PC-3 (cell line): ENCODE measurements at regions of chr7 and their contacts with region 1.

Region 1: GRCh38 chr7:37181550-37181932 is 267.1 kb downstream of the ELMO1 start:
- DNase-seq: no peak
- ATAC-seq: no peak
- H3K4me3 ChIP-seq: no peak overlapping the region
- H3K27ac ChIP-seq: no peak overlapping the region
- H3K4me1 ChIP-seq: no peaks in the 10 kb centered on the region
- H3K27me3 ChIP-seq: peaks cover 25% of the 10 kb centered on the region; the same call in 1 of the 2 replicates
- CTCF ChIP-seq: no peak

Region 2: GRCh38 chr7:36670585-36671431 is 510.7 kb before region 1 on chr7:
- CTCF ChIA-PET with region 1: no interaction called
- POLR2A ChIA-PET with region 1: no interaction called
- intact Hi-C with region 1: loop called (anchors 10 kb)
- DNase-seq: peak; percentile 82
- ATAC-seq: peak; percentile 78
- H3K4me3 ChIP-seq: no peak overlapping the region
- H3K27ac ChIP-seq: no peak overlapping the region
- H3K4me1 ChIP-seq: no peaks in the 10 kb centered on the region
- H3K27me3 ChIP-seq: peaks cover 15% of the 10 kb centered on the region; the same call in 1 of the 2 replicates
- CTCF ChIP-seq: peak; percentile 85

Region 3: DNA sequence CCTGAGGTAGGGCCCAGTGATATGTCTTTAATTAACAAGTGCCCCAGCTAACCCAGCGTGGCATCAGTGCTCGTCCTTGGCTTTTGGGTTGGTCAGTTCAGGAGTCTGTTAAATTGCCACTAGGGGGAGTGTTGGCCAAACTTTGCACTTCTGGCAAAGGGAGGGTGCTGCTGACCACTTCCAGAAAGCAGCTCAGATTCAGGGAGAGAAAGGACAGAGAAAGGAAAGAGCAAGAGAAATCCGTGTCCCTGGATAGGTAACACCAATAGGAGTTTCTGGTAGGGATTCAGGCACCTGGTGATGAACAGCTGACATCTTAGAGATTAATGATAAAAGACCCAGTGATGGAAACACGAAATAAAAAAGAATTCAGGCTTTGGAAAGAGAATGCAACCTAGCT is 214.2 kb before region 1 on chr7:
- CTCF ChIA-PET with region 1: interaction called, 38 read pairs
- POLR2A ChIA-PET with region 1: no interaction called
- intact Hi-C with region 1: loop called (anchors 1 kb)
- DNase-seq: peak; percentile 70
- ATAC-seq: peak; percentile 99
- H3K4me3 ChIP-seq: no peak overlapping the region
- H3K27ac ChIP-seq: no peak overlapping the region
- H3K4me1 ChIP-seq: no peaks in the 10 kb centered on the region
- H3K27me3 ChIP-seq: 0 out of 2 replicates have a peak, but pooled peaks cover 13% of the 10 kb centered on the region
- CTCF ChIP-seq: peak; percentile 82

Region 4: DNA sequence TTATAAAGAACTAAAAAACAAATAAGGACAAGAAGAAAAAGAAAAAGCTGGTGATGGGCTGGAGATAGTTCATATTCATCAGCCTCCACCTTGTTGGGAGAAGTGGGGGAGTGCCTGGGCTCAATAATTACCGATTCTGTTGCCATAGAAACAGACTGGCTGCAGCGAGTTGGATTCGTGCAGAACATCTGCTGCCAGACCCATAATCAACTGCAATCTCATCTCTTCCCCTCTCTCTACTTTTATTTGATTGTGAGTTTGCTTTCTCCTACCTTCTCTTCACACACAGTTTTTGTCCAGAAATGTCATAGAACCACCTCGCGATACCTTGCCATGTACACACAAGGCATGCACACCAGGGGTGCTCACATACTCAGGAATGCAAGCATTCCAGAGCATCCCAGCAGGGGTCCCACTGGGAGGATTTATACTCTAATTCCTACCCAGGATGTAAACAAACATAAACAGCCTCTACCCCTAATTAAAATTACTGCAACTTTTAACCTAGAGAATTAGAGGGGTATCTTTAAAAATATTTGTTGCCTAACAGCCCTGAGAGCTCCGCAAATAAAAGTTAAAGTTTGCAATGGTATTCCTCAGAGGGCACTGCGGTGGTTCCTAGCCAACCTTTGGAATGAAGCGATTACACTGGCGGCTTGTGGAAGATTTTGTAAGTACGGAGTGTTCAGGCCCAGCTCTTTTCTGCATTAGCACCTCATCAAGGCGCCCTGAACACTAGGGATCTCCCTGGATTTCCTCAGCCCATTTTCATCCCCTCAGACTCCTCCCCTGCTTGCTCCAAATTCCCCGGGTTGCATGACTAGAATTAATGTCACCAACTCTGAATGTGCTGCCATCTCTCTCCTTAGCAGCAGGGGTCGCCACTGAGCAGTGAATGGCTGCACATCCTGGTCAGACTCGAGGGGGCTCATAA is 194.8 kb before region 1 on chr7:
- CTCF ChIA-PET with region 1: interaction called, 10 read pairs
- POLR2A ChIA-PET with region 1: no interaction called
- intact Hi-C with region 1: loop called (anchors 1 kb)
- DNase-seq: peak; percentile 61
- ATAC-seq: peak; percentile 67
- H3K4me3 ChIP-seq: no peak overlapping the region
- H3K27ac ChIP-seq: no peak overlapping the region
- H3K4me1 ChIP-seq: no peaks in the 10 kb centered on the region
- H3K27me3 ChIP-seq: peaks cover 37% of the 10 kb centered on the region
- CTCF ChIP-seq: peak; percentile 81

Region 5: GRCh38 chr7:37027557-37028341 is 153.8 kb before region 1 on chr7:
- CTCF ChIA-PET with region 1: interaction called, 26 read pairs
- POLR2A ChIA-PET with region 1: no interaction called
- intact Hi-C with region 1: loop called (anchors 1 kb)
- DNase-seq: peak; percentile 4
- ATAC-seq: no peak
- H3K4me3 ChIP-seq: no peak overlapping the region
- H3K27ac ChIP-seq: no peak overlapping the region
- H3K4me1 ChIP-seq: peaks cover 17% of the 10 kb centered on the region
- H3K27me3 ChIP-seq: 0 out of 2 replicates have a peak, but pooled peaks cover 13% of the 10 kb centered on the region
- CTCF ChIP-seq: 0 out of 2 replicates have a peak, but pooled peaks have one; percentile 29